ENCODE measurements at regions of chr7 and their contacts with region 1.

Region 1: DNA sequence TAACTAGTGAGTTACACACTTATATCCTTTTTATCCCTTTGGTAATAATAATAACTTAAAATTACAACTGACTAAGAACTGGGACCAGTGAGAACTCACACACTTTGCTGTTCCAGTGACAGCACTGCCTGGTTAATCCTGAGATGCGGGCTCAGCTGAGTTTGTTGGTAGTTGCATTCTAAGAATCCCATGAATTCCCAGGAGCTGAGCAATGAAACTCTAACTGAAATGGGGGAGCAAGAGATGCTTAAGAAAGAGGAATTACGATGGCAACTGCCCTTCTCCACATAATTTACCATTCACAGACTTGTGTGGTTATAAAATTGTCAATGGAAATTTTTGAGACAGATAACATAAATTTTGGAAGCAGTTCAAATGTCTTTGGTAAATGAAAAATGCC is 659.4 kb downstream of the MAGI2 start:
- DNase-seq: no peak

Region 2: GRCh38 chr7:78296644-78297371 is 497.3 kb before region 1 on chr7:
- intact Hi-C with region 1: loop called in 1 of 2 experiments (anchors 5 kb)
- DNase-seq: no peak